K562 (cell line): ENCODE measurements at regions of chr4 and their contacts with region 1.

Region 1: DNA sequence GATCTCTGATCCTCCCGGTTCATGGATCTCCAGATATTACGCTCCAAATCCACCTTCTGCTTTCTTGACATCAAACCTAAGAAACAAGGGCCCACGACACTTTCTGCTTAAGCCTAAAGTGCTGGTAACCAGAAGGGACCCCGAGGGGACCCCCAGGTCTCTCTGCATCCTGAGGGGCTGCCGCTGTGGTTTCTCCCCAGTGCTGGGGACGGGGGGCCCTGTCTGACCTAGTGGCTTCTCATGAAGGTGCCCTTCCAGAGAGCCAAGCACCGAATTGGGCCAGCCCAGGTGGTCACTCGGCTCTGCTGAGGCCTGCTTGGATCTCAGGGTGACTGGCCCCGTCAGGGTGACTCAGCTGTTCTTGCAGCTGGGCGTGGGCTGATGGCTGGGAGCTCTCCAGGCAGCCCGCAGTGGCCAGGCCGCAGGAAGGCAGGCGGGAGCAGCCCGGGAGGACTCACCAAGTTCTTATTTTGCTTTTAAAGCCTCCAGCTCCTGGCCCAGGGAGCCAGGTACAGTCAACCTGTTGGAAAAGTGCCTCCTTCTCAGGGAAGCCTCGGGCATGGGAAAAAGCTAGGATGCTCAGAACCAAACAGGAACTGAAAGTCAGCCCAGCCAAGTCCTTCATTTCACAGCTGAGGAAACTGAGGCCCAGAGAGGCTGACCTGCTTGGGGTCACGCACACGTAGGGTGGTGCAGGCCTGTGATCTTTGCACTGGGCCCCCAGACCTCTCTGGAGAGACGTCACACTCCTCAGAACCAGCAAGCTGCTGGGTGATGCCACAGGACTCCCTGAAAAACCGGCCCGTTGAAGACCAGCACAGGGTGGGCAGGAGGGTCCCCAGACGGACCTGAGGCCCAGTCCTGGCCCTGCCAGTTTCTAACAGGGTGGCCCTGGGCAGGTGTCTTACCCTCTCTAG is 16.7 kb downstream of the BLOC1S4 start:
- DNase-seq: peak; percentile 86 to 95 (median 89)
- ATAC-seq: peak; percentile 92
- H3K4me3 ChIP-seq: no peak overlapping the region
- H3K27ac ChIP-seq: peak overlapping the region; percentile 93
- H3K4me1 ChIP-seq: peaks cover 55 to 58% of the 10 kb centered on the region in 2 experiments
- H3K27me3 ChIP-seq: no peaks in the 10 kb centered on the region
- CTCF ChIP-seq: no peak
- EP300 ChIP-seq: peak; percentile 88
- POLR2A ChIP-seq: peak; percentile 80
- RAD21 ChIP-seq: peak in 1 of 2 experiments; percentile 39; a peak in 2 of 4 replicates

Region 2: GRCh38 chr4:6235901-6236640 is 496.6 kb before region 1 on chr4:
- CTCF ChIA-PET with region 1: no interaction called
- POLR2A ChIA-PET with region 1: no interaction called
- in situ Hi-C with region 1: no loop called
- intact Hi-C with region 1: no loop called
- DNase-seq: no peak
- ATAC-seq: no peak
- H3K4me3 ChIP-seq: no peak overlapping the region
- H3K27ac ChIP-seq: no peak overlapping the region
- H3K4me1 ChIP-seq: no peaks in the 10 kb centered on the region; a peak in 1 of 5 replicates
- H3K27me3 ChIP-seq: peaks cover 0 to 47% of the 10 kb centered on the region in 2 experiments; a peak in 3 of 5 replicates
- CTCF ChIP-seq: no peak
- EP300 ChIP-seq: no peak
- POLR2A ChIP-seq: no peak
- RAD21 ChIP-seq: no peak

Region 3: GRCh38 chr4:6751611-6752498 is 19.2 kb after region 1 on chr4:
- CTCF ChIA-PET with region 1: no interaction called
- POLR2A ChIA-PET with region 1: interaction called, 6 read pairs
- in situ Hi-C with region 1: no loop called
- intact Hi-C with region 1: loop called (anchors 2 kb)
- DNase-seq: peak in 1 of 4 experiments; percentile 40
- ATAC-seq: peak; percentile 16
- H3K4me3 ChIP-seq: no peak overlapping the region
- H3K27ac ChIP-seq: peak overlapping the region; percentile 80
- H3K4me1 ChIP-seq: peaks cover 54 to 62% of the 10 kb centered on the region in 2 experiments
- H3K27me3 ChIP-seq: no peaks in the 10 kb centered on the region
- CTCF ChIP-seq: no peak
- EP300 ChIP-seq: no peak
- POLR2A ChIP-seq: no peak
- RAD21 ChIP-seq: no peak

Region 4: GRCh38 chr4:6768539-6768905 is 35.8 kb after region 1 on chr4:
- CTCF ChIA-PET with region 1: no interaction called
- POLR2A ChIA-PET with region 1: interaction called, 12 read pairs
- in situ Hi-C with region 1: no loop called
- intact Hi-C with region 1: no loop called
- DNase-seq: peak in 1 of 4 experiments; percentile 50
- ATAC-seq: peak; percentile 57
- H3K4me3 ChIP-seq: no peak overlapping the region
- H3K27ac ChIP-seq: no peak overlapping the region; the same call in 2 of the 3 replicates
- H3K4me1 ChIP-seq: peaks cover 14 to 22% of the 10 kb centered on the region in 2 experiments
- H3K27me3 ChIP-seq: 0 out of 5 replicates have a peak, but pooled peaks cover 0 to 8% of the 10 kb centered on the region in 2 experiments
- CTCF ChIP-seq: no peak
- EP300 ChIP-seq: no peak
- POLR2A ChIP-seq: no peak
- RAD21 ChIP-seq: no peak